Activated CD4-positive, alpha-beta T cell treated with anti-CD3 and anti-CD28 coated beads for 36 hours (primary cell): ENCODE measurements at regions of chrX and their contacts with region 1.

Region 1: DNA sequence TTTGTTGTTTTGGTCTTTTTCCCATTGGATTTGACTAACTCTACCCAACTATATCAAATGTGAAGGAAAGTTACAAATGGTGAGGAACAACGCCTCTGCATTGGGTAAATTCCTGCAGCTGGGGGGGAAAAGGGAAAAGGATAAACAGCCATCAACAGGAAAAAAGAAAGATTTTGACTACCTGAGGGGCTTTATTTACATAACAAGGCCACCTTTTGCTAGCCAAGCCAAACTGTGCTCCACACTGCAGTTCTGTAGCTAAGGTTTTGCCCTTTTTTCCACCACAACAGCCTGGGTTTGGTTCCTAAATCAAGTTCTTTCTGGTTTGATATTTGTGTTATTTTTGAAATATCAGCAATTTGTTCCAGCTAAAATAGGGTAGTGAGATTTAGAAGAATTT is 40.8 kb downstream of the RHOXF2B start:
- DNase-seq: no peak
- ATAC-seq: no peak
- H3K4me3 Mint-ChIP-seq: no peak overlapping the region
- H3K27ac Mint-ChIP-seq: no peak overlapping the region
- H3K4me1 Mint-ChIP-seq: no peaks in the 10 kb centered on the region
- H3K27me3 Mint-ChIP-seq: no peaks in the 10 kb centered on the region

Region 2: GRCh38 chrX:119899125-119899524 is 137.6 kb before region 1 on chrX:
- CTCF ChIA-PET with region 1: no interaction called
- POLR2A ChIA-PET with region 1: no interaction called
- intact Hi-C with region 1: no loop called
- DNase-seq: no peak
- ATAC-seq: no peak
- H3K4me3 Mint-ChIP-seq: no peak overlapping the region
- H3K27ac Mint-ChIP-seq: no peak overlapping the region
- H3K4me1 Mint-ChIP-seq: no peaks in the 10 kb centered on the region
- H3K27me3 Mint-ChIP-seq: no peaks in the 10 kb centered on the region

Region 3: DNA sequence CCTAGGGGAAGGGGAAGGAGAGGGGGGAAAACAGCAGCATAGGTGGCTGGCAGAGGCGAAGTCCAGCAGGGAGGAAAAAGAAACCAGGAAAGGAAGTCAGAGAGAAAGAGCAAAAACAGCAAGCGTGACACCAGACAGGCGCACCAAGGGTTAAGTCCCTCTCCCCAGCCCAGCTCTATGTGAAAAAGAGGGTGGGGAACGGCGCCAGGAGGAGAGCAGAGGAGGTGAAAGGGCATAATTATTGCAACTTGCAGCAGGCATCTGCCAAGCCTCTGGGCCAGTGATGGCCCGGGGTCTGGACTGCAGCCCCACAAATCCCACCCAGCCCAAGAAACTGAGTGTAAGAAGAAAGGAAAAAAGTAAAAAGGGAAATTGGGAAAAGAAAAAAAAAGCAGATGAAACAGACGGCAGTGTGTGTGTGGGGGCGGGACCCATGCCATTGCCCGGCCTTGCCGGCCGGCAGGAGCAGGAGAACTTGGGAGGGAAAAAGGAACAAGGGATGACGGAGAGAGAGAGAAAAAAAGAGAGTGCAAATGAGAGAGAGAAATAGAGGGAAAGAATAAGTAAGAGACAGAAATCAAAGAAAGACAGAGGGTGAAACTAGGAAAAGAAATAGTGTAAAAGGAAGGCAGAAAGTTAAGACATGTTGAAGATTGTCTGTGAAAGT is 107.6 kb after region 1 on chrX:
- CTCF ChIA-PET with region 1: no interaction called
- POLR2A ChIA-PET with region 1: no interaction called
- intact Hi-C with region 1: loop called in 1 of 2 experiments (anchors 10 kb)
- DNase-seq: peak; percentile 4
- ATAC-seq: no peak
- H3K4me3 Mint-ChIP-seq: no peak overlapping the region
- H3K27ac Mint-ChIP-seq: no peak overlapping the region
- H3K4me1 Mint-ChIP-seq: peaks cover 19% of the 10 kb centered on the region
- H3K27me3 Mint-ChIP-seq: no peaks in the 10 kb centered on the region

Region 4: GRCh38 chrX:120207009-120207615 is 170.4 kb after region 1 on chrX:
- CTCF ChIA-PET with region 1: no interaction called
- POLR2A ChIA-PET with region 1: no interaction called
- intact Hi-C with region 1: loop called in 1 of 2 experiments (anchors 10 kb)
- DNase-seq: no peak
- ATAC-seq: no peak
- H3K4me3 Mint-ChIP-seq: no peak overlapping the region
- H3K27ac Mint-ChIP-seq: no peak overlapping the region
- H3K4me1 Mint-ChIP-seq: no peaks in the 10 kb centered on the region
- H3K27me3 Mint-ChIP-seq: no peaks in the 10 kb centered on the region